Activated naive CD4-positive, alpha-beta T cell treated with anti-CD3 and anti-CD28 coated beads for 36 hours (primary cell): ENCODE measurements at regions of chr18 and their contacts with region 1.

Region 1: DNA sequence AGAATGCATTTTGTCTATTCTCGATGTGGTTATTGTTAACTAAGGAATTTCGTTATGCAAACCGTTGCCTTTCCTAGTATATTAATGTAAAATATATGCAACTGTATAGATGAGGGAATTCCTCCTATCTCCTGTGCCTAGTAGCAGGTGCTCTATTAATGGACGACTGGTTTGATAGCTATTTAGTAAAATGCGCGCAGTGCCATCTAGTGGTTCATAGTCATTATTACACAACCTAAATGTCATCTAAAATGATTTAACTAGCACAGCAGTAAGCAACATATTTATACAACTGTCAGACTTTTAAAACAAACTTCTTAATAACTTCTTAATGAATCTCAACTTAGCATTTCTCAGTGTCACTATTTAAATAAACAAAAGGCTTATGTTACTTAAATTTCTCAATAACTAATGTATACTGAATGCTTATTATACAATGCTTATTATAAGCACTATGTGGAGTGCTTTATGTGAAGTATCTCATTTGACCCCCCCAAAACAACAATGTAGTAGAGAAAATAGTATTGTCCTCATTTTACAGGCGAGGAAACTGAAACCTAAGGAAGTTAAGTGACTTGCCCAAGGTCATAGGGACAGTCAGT is 77.9 kb downstream of the DTNA start:
- DNase-seq: peak; percentile 61
- H3K4me3 Mint-ChIP-seq: no peak overlapping the region
- H3K27ac Mint-ChIP-seq: no peak overlapping the region
- H3K4me1 Mint-ChIP-seq: peaks cover 12% of the 10 kb centered on the region
- H3K27me3 Mint-ChIP-seq: peaks cover 18% of the 10 kb centered on the region

Region 2: GRCh38 chr18:33751613-33752221 is 1036.3 kb before region 1 on chr18:
- CTCF ChIA-PET with region 1: no interaction called
- intact Hi-C with region 1: loop called (anchors 1 kb)
- DNase-seq: no peak
- H3K4me3 Mint-ChIP-seq: no peak overlapping the region
- H3K27ac Mint-ChIP-seq: no peak overlapping the region
- H3K4me1 Mint-ChIP-seq: no peaks in the 10 kb centered on the region
- H3K27me3 Mint-ChIP-seq: no peaks in the 10 kb centered on the region

Region 3: DNA sequence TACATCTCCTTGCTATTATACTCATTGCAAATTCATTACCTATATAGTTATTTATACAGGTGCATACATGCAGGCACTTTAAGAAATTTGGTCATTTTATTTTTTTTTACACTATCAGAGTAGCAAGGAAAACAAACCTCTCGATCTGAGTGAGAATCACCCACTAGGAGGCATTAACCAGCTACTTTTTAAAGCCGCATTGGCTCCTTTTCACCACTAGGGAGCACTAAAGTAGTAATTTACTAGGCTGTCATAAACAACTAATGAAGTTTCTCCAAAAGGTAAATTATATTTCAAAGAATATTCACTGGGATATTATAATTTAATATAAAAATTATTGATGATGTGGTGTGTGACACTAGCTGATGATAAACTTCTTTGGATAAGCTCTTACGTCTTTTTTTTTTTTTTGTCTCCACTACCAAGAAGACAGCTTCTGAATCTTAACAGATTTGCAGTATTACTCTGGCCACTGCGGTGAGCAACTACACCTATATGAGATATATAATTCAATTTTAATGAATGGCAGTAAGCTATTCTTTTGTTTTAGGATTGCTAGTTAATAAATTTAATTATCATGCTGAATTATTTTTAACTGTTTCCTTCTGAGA is 665.2 kb before region 1 on chr18:
- CTCF ChIA-PET with region 1: interaction called, 8 read pairs
- intact Hi-C with region 1: loop called (anchors 1 kb)
- DNase-seq: peak; percentile 30
- H3K4me3 Mint-ChIP-seq: no peak overlapping the region
- H3K27ac Mint-ChIP-seq: no peak overlapping the region
- H3K4me1 Mint-ChIP-seq: no peaks in the 10 kb centered on the region
- H3K27me3 Mint-ChIP-seq: no peaks in the 10 kb centered on the region

Region 4: GRCh38 chr18:34661464-34662111 is 126.4 kb before region 1 on chr18:
- CTCF ChIA-PET with region 1: interaction called, 59 read pairs
- intact Hi-C with region 1: loop called (anchors 1 kb)
- DNase-seq: no peak
- H3K4me3 Mint-ChIP-seq: no peak overlapping the region
- H3K27ac Mint-ChIP-seq: no peak overlapping the region
- H3K4me1 Mint-ChIP-seq: no peaks in the 10 kb centered on the region
- H3K27me3 Mint-ChIP-seq: peaks cover 16% of the 10 kb centered on the region

Region 5: DNA sequence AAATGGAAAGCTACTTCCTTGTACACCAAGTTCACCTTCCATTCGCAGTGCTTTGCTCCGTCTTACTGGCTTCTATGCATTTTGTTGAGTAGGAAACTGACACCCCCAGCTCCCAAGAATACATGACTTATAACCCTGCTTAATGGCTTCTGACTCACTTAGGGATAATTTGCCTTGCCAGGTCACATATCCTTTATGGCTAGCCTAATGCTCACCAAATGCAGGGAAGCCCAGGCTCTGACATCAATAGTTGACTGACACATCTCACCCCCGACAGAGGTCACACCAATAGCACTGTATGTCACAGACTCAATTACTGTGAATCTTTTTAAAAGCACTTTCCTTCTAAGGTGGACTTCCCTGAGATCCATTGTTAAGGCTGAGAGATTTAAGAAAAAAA is 69.3 kb after region 1 on chr18:
- CTCF ChIA-PET with region 1: no interaction called
- intact Hi-C with region 1: loop called (anchors 1 kb)
- DNase-seq: no peak
- H3K4me3 Mint-ChIP-seq: no peak overlapping the region
- H3K27ac Mint-ChIP-seq: no peak overlapping the region
- H3K4me1 Mint-ChIP-seq: peaks cover 32% of the 10 kb centered on the region
- H3K27me3 Mint-ChIP-seq: peaks cover 11% of the 10 kb centered on the region